ENCODE measurements at regions of chr10 and their contacts with region 1.

Region 1: GRCh38 chr10:125838802-125839575 is 15.6 kb downstream of the BCCIP start:
- DNase-seq: no peak
- ATAC-seq: no peak
- H3K4me3 ChIP-seq: no peak overlapping the region
- H3K27ac ChIP-seq: no peak overlapping the region
- H3K4me1 ChIP-seq: peaks cover 2% of the 10 kb centered on the region
- H3K27me3 ChIP-seq: no peaks in the 10 kb centered on the region
- CTCF ChIP-seq: no peak
- POLR2A ChIP-seq: no peak
- RAD21 ChIP-seq: no peak

Region 2: GRCh38 chr10:125734823-125735222 is 104.2 kb before region 1 on chr10:
- CTCF ChIA-PET with region 1: no interaction called
- POLR2A ChIA-PET with region 1: no interaction called
- dilution Hi-C with region 1: no loop called
- in situ Hi-C with region 1: no loop called
- intact Hi-C with region 1: loop called (anchors 5 kb)
- DNase-seq: no peak
- ATAC-seq: no peak
- H3K4me3 ChIP-seq: no peak overlapping the region
- H3K27ac ChIP-seq: no peak overlapping the region
- H3K4me1 ChIP-seq: no peaks in the 10 kb centered on the region
- H3K27me3 ChIP-seq: no peaks in the 10 kb centered on the region
- CTCF ChIP-seq: 0 out of 2 replicates have a peak, but pooled peaks have one; percentile 8
- POLR2A ChIP-seq: no peak
- RAD21 ChIP-seq: no peak

Measured in IMR-90 (cell line).